Activated naive CD4-positive, alpha-beta T cell treated with anti-CD3 and anti-CD28 coated beads, Interleukin-2, amount 10 ng/mL, durations not matched to agents 7 days and 5 days (primary cell): ENCODE measurements at regions of chr5 and their contacts with region 1.

Region 1: GRCh38 chr5:157917899-157918809 is 59.2 kb upstream of the CLINT1 start:
- DNase-seq: peak; percentile 75
- H3K4me3 Mint-ChIP-seq: no peak overlapping the region
- H3K27ac Mint-ChIP-seq: peak overlapping the region; percentile 79
- H3K4me1 Mint-ChIP-seq: peaks cover 32% of the 10 kb centered on the region
- H3K27me3 Mint-ChIP-seq: no peaks in the 10 kb centered on the region

Region 2: GRCh38 chr5:157778121-157778805 is 139.9 kb before region 1 on chr5:
- CTCF ChIA-PET with region 1: no interaction called
- DNase-seq: no peak
- H3K4me3 Mint-ChIP-seq: no peak overlapping the region
- H3K27ac Mint-ChIP-seq: no peak overlapping the region
- H3K4me1 Mint-ChIP-seq: peaks cover 4% of the 10 kb centered on the region
- H3K27me3 Mint-ChIP-seq: peaks cover 4% of the 10 kb centered on the region

Region 3: DNA sequence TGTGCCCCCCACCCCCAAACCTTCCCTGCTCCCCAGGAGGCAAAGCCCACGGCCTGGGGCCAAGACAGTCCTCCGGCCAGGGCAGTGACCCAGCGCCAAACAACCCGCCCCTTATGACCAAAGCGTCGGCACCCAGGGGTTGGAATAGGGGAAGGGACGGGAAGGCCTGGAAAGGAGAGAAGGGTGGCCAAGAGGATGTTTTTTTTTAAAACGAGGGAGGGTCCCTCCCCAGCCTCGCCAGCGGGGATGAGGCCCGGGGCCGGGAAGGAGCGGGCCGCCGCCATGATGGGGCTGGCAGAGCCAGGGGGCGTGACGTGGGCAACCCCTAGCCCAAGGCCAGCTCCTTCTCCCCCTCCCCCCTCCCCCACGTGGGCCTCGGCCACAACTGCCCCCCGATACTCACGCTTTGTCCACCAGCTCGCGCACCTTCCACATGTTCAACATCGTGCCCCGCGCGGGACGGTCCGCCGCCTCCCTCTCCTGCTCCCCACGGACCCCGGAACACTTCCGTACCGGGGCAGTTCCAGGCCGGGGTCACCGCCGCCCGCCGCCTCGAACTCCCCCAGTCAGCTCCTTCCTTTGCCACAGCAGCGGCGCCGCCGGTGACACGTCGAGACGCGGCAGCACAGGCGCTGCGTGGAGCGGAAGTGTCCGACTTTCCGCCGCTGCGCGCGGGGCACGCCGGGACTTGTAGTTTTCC is 59.5 kb before region 1 on chr5 and contains the start of gene CLINT1:
- CTCF ChIA-PET with region 1: interaction called, 25 read pairs
- DNase-seq: peak; percentile 93
- H3K4me3 Mint-ChIP-seq: peak within 1 kb of the TSS; percentile 93
- H3K27ac Mint-ChIP-seq: peak within 1 kb of the TSS; percentile 94
- H3K4me1 Mint-ChIP-seq: peaks cover 73% of the 10 kb centered on the region
- H3K27me3 Mint-ChIP-seq: no peaks in the 10 kb centered on the region